HepG2 (cell line): ENCODE measurements at regions of chr1 and their contacts with region 1.

Region 1: DNA sequence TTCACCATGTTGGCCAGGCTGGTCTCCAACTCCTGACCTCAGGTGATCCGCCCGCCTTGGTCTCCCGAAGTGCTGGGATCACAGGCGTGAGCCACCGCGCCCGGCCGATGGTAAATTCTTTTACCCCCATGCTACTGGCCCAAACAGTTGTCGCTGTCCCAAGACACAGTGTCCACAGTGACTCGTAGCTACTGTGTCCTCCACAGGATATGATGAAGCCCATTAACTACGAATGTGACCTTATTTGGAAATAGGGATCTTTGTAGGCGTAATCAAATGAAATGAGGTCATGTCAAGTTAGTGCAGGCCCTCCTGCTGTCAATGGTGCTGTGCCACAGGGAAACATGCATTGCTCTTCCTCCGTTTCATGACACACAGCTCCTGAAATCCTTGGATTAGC is 8.5 kb downstream of the FNDC10 start:
- DNase-seq: no peak
- ATAC-seq: no peak
- H3K4me3 ChIP-seq: no peak overlapping the region
- H3K27ac ChIP-seq: no peak overlapping the region
- H3K4me1 ChIP-seq: peaks cover 27% of the 10 kb centered on the region
- H3K27me3 ChIP-seq: peaks cover 4 to 25% of the 10 kb centered on the region in 2 experiments; a peak in 4 of 5 replicates
- CTCF ChIP-seq: no peak
- EP300 ChIP-seq: no peak
- POLR2A ChIP-seq: no peak
- RAD21 ChIP-seq: no peak

Region 2: DNA sequence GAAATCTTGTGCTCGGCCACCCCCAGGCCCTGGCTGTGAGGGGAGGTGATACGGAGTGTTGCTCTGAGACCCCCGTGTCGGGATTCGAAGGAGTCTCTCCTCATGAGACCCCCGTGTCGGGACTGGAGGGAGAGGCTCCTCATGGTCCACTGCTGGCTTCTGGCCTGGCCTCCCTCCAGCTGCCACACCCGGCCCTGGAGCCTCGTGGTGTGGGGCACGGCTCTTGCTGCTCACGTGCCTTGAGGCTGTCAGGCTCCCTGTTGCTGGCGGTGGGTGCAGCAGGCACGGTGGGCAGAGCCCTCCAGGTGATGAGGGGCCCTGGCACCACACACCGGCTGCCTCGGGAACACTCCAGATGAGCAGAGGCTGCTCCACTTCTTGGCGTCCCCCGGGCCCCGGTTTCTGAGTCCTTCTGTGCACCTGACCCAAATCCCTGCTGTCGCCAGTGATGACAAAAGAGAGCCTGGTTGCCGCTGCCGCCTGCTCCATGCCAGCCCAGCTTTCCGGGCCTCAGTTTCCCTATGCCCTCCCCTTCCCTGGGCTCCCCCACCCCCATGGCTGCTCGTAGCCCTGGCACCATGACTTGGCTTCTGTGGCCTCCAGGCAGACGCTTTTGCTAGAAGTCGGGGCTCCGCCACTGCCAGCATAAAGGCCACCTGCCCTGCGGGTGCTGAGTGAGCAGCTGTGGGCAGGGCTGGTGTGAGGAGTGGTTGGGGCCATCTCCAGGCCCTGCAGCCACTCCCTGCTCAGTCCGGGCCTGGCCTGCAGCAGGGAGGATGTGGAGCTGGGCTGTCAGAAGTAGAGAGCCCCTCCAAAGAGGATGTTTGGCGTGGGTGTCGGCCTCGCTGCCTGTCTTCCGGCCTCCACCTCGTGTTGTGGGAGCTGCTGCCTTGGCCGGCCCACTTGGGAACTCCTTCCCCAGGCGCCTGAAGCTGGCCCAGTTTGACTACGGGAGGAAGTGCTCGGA is 62.9 kb before region 1 on chr1:
- CTCF ChIA-PET with region 1: no interaction called
- POLR2A ChIA-PET with region 1: no interaction called
- in situ Hi-C with region 1: no loop called
- intact Hi-C with region 1: no loop called
- DNase-seq: no peak
- ATAC-seq: no peak
- H3K4me3 ChIP-seq: no peak overlapping the region
- H3K27ac ChIP-seq: no peak overlapping the region
- H3K4me1 ChIP-seq: no peaks in the 10 kb centered on the region
- H3K27me3 ChIP-seq: no peaks in the 10 kb centered on the region
- CTCF ChIP-seq: no peak
- EP300 ChIP-seq: no peak
- POLR2A ChIP-seq: no peak
- RAD21 ChIP-seq: no peak

Region 3: DNA sequence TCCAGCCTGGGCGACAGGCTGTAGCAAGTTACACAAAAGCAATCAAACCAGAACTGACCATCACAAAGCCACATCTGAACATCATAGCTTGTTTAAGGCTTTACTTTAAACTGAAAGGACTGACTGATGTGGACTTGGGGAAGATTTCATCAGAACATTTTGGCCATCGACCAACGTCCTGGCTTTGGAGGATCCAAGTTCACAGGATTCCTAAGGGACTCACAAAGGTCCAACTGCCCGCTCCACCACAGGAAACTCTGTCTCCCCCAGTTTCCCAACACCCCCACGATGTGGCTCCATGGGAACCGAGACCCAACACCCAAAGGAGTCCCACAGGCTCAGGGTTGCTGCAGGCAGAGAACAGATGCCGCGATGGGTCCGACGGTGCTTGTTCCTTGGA is 26.1 kb before region 1 on chr1:
- CTCF ChIA-PET with region 1: no interaction called
- POLR2A ChIA-PET with region 1: interaction called, 3 read pairs
- in situ Hi-C with region 1: no loop called
- intact Hi-C with region 1: loop called (anchors 1 kb)
- DNase-seq: no peak
- ATAC-seq: no peak
- H3K4me3 ChIP-seq: no peak overlapping the region
- H3K27ac ChIP-seq: no peak overlapping the region
- H3K4me1 ChIP-seq: peaks cover 4% of the 10 kb centered on the region; the same call in 1 of the 2 replicates
- H3K27me3 ChIP-seq: no peaks in the 10 kb centered on the region
- CTCF ChIP-seq: no peak
- EP300 ChIP-seq: no peak
- POLR2A ChIP-seq: no peak
- RAD21 ChIP-seq: no peak

Region 4: GRCh38 chr1:1574721-1575537 is 16.5 kb before region 1 on chr1 and contains the start of gene SSU72:
- CTCF ChIA-PET with region 1: no interaction called
- POLR2A ChIA-PET with region 1: interaction called, 12 read pairs
- in situ Hi-C with region 1: no loop called
- intact Hi-C with region 1: no loop called
- DNase-seq: peak; percentile 76
- ATAC-seq: peak; percentile 58
- H3K4me3 ChIP-seq: peak within 1 kb of the TSS; percentile 86 to 99 (median 99)
- H3K27ac ChIP-seq: peak within 1 kb of the TSS; percentile 87
- H3K4me1 ChIP-seq: peaks cover 56% of the 10 kb centered on the region
- H3K27me3 ChIP-seq: peaks cover 0 to 13% of the 10 kb centered on the region in 2 experiments; a peak in 1 of 5 replicates
- CTCF ChIP-seq: 0 out of 2 replicates have a peak, but pooled peaks have one; percentile 19
- EP300 ChIP-seq: peak in 1 of 2 experiments; percentile 42; a peak in 1 of 4 replicates
- POLR2A ChIP-seq: peak; percentile 70 to 76
- RAD21 ChIP-seq: peak; percentile 23
- total RNA-seq, gene SSU72: 63.5 and 67.1 TPM in 2 replicates

Region 5: GRCh38 chr1:1605034-1605591 is 13.7 kb after region 1 on chr1:
- CTCF ChIA-PET with region 1: no interaction called
- POLR2A ChIA-PET with region 1: no interaction called
- in situ Hi-C with region 1: no loop called
- intact Hi-C with region 1: no loop called
- DNase-seq: no peak
- ATAC-seq: no peak; the same call in 2 of the 3 replicates
- H3K4me3 ChIP-seq: no peak overlapping the region
- H3K27ac ChIP-seq: no peak overlapping the region
- H3K4me1 ChIP-seq: peaks cover 37% of the 10 kb centered on the region
- H3K27me3 ChIP-seq: peaks cover 1 to 9% of the 10 kb centered on the region in 2 experiments; a peak in 2 of 5 replicates
- CTCF ChIP-seq: no peak
- EP300 ChIP-seq: no peak
- POLR2A ChIP-seq: no peak
- RAD21 ChIP-seq: no peak